AG04449 (cell line): ENCODE measurements at regions of chr2 and their contacts with region 1.

Region 1: GRCh38 chr2:226799181-226799975 is at the start of gene IRS1:
- DNase-seq: no peak
- H3K4me3 ChIP-seq: peak within 1 kb of the TSS; percentile 83
- CTCF ChIP-seq: peak; percentile 33

Region 2: DNA sequence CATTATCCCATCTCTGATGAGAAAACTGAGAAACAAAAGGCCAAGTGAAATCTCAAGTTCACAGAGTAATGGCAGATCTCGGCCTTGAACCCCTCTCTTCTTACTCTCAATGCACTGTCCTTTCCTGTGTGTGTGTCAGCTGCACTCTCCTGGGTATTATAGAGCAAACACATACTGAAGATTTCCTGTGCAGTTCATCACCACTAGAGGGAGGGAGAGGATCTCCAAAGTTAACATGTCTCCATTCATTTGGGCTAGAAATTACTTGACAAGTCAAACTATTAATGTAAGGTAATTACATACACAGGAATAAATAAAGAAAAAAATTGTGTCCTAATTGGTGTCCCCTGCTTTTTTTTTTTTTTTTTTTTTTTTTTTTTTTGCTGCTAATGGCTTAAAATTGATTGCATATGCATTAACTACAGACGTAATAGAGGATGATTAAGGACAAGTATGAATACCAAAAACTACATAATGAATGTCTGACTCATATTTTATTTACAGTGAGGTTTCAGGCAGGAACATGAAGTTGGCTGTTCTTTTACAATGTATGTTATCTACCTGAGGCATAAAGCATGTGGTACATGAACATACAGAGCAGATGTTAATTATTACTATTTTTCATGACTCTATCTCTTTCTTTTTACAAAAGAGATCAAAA is 1130.6 kb before region 1 on chr2:
- CTCF ChIA-PET with region 1: interaction called, 57 read pairs
- POLR2A ChIA-PET with region 1: no interaction called
- DNase-seq: peak; percentile 21
- H3K4me3 ChIP-seq: no peak overlapping the region
- CTCF ChIP-seq: peak; percentile 78

Region 3: GRCh38 chr2:225889446-225889850 is 909.9 kb before region 1 on chr2:
- CTCF ChIA-PET with region 1: interaction called, 18 read pairs
- POLR2A ChIA-PET with region 1: no interaction called
- DNase-seq: peak; percentile 77
- H3K4me3 ChIP-seq: no peak overlapping the region
- CTCF ChIP-seq: peak; percentile 55

Region 4: GRCh38 chr2:226683196-226683595 is 116.2 kb before region 1 on chr2:
- CTCF ChIA-PET with region 1: no interaction called
- POLR2A ChIA-PET with region 1: no interaction called
- DNase-seq: no peak
- H3K4me3 ChIP-seq: no peak overlapping the region
- CTCF ChIP-seq: no peak

Region 5: DNA sequence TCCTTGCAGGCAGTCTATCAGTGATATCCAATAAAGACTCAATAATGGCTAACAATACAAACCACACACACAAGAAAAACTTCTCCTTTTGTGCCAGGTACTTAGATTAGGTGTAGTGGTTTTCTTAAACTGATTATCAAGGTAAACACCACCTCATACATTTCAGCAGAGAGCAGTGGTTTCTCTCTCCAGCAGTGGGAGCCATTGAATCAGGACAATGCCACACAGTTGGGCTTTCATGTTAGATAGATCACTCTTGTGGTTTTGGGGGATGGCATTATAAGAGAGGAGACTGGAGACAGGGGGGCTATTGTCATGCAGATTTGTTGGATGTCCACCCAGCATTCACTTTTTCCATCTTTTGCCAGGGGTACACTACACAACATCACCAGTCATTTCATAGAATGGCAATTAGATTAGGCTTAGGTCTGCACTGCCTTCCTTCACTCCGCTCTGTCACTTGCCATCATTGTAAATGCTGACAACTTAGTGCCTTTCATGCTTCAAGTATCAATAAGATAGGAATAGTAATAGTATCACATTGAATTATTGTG is 13.8 kb after region 1 on chr2:
- CTCF ChIA-PET with region 1: interaction called, 14 read pairs
- POLR2A ChIA-PET with region 1: no interaction called
- DNase-seq: no peak
- H3K4me3 ChIP-seq: no peak overlapping the region
- CTCF ChIP-seq: peak; percentile 56

Region 6: DNA sequence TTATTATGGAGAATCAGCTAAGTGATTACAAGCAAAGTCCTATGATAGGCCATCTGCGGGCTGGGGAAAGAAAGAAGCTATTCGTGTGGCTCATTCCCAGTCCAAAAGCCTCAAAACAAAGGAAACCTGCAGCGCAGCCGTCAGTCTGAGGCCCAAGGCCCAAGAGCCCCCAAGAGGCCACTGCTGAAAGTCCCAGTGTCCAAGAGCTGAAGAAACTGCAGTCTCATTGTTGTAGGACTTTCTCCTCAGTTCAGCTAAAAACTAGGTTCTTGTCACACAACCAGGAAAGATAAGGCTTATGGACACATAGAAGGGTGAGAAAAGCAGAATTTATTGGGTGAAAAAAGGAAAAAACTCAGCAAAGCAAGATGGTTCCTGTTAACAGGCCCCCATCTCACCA is 179.6 kb after region 1 on chr2:
- CTCF ChIA-PET with region 1: interaction called, 117 read pairs
- POLR2A ChIA-PET with region 1: interaction called, 5 read pairs
- DNase-seq: no peak
- H3K4me3 ChIP-seq: no peak overlapping the region
- CTCF ChIP-seq: no peak

Region 7: DNA sequence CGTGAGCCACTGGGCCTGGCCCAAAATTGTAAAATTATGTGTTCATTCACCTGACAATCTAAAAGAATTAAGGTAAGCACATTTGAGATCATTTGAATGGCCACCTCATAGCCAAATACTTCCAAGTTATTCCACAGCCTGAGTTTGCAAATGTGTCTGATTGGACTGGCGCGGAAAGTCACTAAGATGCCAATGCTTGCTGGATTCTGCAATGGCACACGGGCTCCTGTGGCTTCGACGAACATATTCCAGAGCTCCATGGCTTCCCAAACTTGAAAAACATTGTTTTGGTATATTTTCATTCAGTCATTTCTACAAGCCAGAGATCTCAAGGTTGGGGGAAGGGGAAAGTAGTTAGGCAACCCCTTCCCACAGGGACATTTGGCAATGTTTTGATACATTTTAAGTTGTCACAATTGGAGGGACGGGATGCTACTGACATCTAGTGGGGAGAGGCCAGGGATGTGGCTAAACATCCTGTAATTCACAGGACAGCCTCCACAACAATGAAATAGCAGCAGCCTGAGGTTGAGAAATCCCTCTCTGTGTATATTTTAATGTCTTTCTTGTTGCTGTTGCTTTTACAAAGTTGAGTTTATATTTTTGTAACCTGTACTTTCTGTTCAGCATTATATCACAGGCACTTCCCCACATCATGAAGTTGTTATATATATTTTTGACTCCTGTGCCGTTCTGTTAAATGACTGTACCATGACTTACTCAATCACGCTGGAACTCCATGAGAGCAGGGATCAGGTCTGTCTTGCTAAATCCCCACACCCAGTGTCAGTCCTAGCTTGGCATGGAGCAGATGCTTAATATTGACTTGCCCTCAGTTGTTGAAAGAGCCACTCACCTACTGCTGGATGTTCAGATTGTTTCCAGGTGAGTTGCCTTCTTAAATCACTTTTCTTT is 307.7 kb after region 1 on chr2:
- CTCF ChIA-PET with region 1: interaction called, 15 read pairs
- POLR2A ChIA-PET with region 1: no interaction called
- DNase-seq: no peak
- H3K4me3 ChIP-seq: no peak overlapping the region
- CTCF ChIP-seq: peak; percentile 76